ENCODE measurements at regions of chr17 and their contacts with region 1.

Region 1: DNA sequence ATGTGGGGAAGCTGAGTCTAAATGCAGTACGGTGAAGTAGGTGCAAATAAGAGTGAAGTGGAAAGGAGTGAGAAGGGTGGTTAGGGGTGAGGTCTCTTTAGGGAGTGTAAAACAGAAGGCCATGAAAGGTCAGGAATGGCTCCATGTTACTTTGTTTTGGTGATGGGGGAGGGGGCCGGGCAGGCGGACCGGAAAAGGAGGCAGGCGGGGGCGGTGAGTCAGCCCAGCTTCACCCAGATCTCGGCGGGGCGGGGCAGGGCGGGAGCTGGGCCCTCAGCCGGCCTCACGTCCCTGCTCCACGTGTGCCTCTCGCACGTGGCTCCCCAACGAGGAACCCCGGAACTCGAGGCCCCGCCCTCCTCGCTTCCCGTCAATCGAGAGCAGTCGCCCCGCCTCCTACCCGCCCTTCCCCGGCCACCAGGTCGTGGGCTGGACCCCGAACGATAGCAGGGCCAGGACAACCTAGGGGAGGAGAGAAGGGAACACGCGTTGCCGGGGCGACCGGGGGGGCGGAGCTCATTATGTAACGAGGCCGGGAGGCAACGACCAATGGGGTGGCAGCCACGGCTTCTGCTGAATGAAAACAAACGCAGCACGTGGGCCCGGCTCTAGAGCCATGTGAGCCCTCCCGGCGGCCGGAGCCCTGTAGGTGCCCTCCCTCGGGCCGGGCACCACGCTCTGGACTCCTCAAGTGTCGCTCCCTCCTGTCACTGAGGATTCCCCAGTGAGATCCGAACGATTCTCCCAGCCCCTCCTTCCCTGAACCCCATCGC is 1.4 kb downstream of the NR1D1 start:
- DNase-seq: peak; percentile 99
- ATAC-seq: peak; percentile 59
- H3K4me3 Mint-ChIP-seq: peak overlapping the region; percentile 88
- H3K27ac Mint-ChIP-seq: peak overlapping the region; percentile 90
- H3K4me1 Mint-ChIP-seq: peaks cover 86% of the 10 kb centered on the region
- H3K27me3 Mint-ChIP-seq: no peaks in the 10 kb centered on the region

Region 2: DNA sequence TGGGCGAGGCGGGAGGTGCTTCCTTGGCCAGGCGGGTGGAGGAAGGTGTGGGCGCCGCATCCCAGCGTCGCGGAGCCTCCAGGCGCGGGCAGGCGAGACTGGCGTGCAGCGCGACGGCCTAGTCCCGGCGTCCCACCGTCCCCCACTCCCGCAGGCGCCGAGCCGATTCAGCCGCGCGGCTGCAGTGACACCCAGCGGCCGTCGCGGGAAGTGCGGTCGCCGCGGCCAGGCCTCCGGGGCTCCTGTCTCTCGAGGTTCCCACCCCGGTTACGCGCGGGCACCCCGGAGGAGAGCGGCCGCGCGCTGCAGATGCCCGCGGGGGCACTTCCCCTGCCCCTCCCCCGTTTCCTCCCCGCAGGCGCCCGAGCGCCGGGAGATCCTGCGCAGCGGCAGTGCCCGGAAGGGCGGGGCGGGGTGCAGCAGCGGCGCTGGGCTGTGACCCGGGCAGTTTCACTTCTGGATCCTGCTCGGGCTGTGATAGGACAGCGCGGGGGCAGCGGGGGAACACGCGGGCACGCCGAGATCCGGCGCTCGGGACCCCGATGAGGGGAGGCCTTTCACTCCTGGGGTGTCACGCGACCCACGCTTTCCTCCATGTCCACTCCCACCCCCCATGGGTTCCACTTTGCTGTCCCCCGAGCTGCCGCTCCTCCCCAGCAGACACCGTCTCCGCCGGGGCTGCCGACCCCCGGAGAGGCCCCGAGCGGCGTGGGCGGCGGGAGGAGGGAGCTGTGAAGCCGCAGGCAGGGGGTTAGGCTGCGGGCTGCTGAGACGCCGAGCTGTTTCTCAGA is 344.7 kb before region 1 on chr17:
- CTCF ChIA-PET with region 1: no interaction called
- POLR2A ChIA-PET with region 1: no interaction called
- intact Hi-C with region 1: loop called in 1 of 2 experiments (anchors 5 kb)
- DNase-seq: peak; percentile 98
- ATAC-seq: peak; percentile 86
- H3K4me3 Mint-ChIP-seq: peak overlapping the region; percentile 77
- H3K27ac Mint-ChIP-seq: peak overlapping the region; percentile 76
- H3K4me1 Mint-ChIP-seq: peaks cover 61% of the 10 kb centered on the region
- H3K27me3 Mint-ChIP-seq: no peaks in the 10 kb centered on the region

Region 3: GRCh38 chr17:39927101-39927928 is 171.7 kb before region 1 on chr17 and contains the starts of genes LRRC3C and ORMDL3:
- CTCF ChIA-PET with region 1: no interaction called
- POLR2A ChIA-PET with region 1: no interaction called
- intact Hi-C with region 1: loop called in 1 of 2 experiments (anchors 1 kb)
- DNase-seq: peak; percentile 96
- ATAC-seq: peak; percentile 78
- H3K4me3 Mint-ChIP-seq: peak within 1 kb of the TSS; percentile 85
- H3K27ac Mint-ChIP-seq: peak within 1 kb of the TSS; percentile 95
- H3K4me1 Mint-ChIP-seq: peaks cover 56% of the 10 kb centered on the region
- H3K27me3 Mint-ChIP-seq: no peaks in the 10 kb centered on the region
- total RNA-seq, gene LRRC3C: not detected
- total RNA-seq, gene ORMDL3: 46.8 to 64.9 TPM

Region 4: GRCh38 chr17:40113110-40113906 is 14.3 kb after region 1 on chr17:
- CTCF ChIA-PET with region 1: interaction called, 156 read pairs
- POLR2A ChIA-PET with region 1: interaction called, 34 read pairs
- intact Hi-C with region 1: loop called (anchors 1 kb)
- DNase-seq: peak; percentile 96
- ATAC-seq: peak; percentile 82
- H3K4me3 Mint-ChIP-seq: peak overlapping the region; percentile 72
- H3K27ac Mint-ChIP-seq: peak overlapping the region; percentile 86
- H3K4me1 Mint-ChIP-seq: peaks cover 55% of the 10 kb centered on the region
- H3K27me3 Mint-ChIP-seq: no peaks in the 10 kb centered on the region

Region 5: DNA sequence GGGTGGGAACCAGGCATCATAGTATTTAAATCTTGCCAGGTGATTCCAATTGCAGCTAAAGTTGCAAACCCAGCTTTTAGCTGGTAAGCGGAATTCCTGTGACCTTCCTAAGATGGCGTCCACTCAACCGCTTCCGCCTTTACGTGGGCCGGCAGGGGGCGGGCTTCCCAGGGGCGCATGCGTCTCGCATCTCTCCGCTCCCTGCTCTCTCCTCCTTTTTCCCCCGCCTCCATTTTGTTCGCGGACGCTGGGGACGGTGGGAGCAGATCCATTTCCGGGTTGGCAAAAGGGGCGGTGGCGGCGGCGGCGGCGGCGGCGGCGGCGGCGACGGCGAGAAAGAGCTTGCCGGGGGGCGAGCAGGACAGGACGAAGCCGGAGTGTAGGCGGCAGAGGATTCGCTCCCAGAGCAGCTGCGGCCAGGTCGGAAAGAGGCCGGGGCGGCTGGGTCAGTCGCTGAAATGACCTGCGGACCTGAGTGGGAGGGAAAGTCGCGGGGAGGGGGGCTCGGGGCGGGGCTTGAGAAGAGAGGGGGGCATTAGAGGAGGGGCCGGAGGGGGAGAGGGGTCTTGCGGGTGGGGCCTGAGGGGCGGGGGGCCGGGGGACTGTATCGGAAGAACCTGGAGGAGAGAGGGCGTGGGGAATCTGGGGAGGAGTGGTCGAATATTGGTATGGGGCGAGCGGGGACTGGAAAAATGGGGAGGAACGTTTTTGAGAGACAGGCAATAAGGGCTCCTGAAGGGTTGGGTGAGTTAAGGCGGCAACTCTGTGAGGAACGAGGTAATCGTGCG is 120.2 kb after region 1 on chr17 and contains the start of gene WIPF2:
- CTCF ChIA-PET with region 1: no interaction called
- POLR2A ChIA-PET with region 1: interaction called, 5 read pairs
- intact Hi-C with region 1: loop called in 1 of 2 experiments (anchors 1 kb)
- DNase-seq: peak; percentile 98
- ATAC-seq: peak; percentile 96
- H3K4me3 Mint-ChIP-seq: peak within 1 kb of the TSS; percentile 89
- H3K27ac Mint-ChIP-seq: peak within 1 kb of the TSS; percentile 100
- H3K4me1 Mint-ChIP-seq: peaks cover 26% of the 10 kb centered on the region
- H3K27me3 Mint-ChIP-seq: no peaks in the 10 kb centered on the region
- total RNA-seq, gene WIPF2: 18.4 to 23.6 TPM

Region 6: GRCh38 chr17:40443583-40444327 is 344.7 kb after region 1 on chr17:
- CTCF ChIA-PET with region 1: no interaction called
- POLR2A ChIA-PET with region 1: no interaction called
- intact Hi-C with region 1: no loop called
- DNase-seq: peak; percentile 83
- ATAC-seq: peak; percentile 68
- H3K4me3 Mint-ChIP-seq: peak overlapping the region; percentile 70
- H3K27ac Mint-ChIP-seq: peak overlapping the region; percentile 88
- H3K4me1 Mint-ChIP-seq: peaks cover 45% of the 10 kb centered on the region
- H3K27me3 Mint-ChIP-seq: peaks cover 5% of the 10 kb centered on the region

Region 7: GRCh38 chr17:40480501-40481003 is 381.5 kb after region 1 on chr17:
- CTCF ChIA-PET with region 1: no interaction called
- POLR2A ChIA-PET with region 1: no interaction called
- intact Hi-C with region 1: loop called in 1 of 2 experiments (anchors 1 kb)
- DNase-seq: peak; percentile 95
- ATAC-seq: peak; percentile 94
- H3K4me3 Mint-ChIP-seq: peak overlapping the region; percentile 60
- H3K27ac Mint-ChIP-seq: peak overlapping the region; percentile 96
- H3K4me1 Mint-ChIP-seq: peaks cover 70% of the 10 kb centered on the region
- H3K27me3 Mint-ChIP-seq: no peaks in the 10 kb centered on the region

Measured in activated CD4-positive, alpha-beta T cell treated with anti-CD3 and anti-CD28 coated beads for 36 hours (primary cell).